ENCODE measurements at regions of chr5 and their contacts with region 1.

Region 1: DNA sequence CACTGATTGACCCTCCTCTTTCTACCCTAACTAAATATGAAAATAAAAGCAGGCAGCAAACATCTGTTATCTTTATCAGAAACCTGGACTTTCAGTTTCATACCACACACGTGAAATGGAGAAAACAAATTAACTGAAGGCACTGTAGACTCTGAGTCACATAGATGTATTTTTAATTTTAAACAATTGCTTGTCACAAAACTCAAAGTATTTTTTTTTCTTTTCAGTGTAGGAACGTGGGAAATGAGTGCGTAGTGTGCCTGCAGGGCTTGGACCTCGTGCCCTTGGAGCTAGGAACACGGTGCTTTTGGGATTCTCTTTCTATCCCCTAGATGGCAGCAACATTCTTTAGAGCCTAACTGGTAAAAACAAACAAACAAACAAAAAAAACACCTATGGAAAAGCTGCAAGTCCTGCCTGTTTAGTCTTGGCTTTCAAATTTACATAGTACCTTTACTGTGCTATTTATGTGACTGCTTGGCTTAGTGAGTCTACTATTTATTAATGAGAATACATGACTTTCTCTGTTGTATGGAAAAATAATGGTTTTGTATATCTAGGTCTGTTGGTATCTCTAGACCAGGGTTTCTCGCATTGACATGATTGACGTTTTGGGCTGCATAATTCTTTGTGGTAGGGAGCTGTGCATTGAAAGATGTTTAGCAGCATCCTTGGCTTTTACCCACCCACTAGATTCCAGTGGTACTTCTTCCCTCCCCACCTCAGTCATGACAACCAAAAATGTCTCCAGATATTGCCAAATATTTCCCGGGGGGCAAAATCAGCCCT is 16.8 kb upstream of the ACTBL2 start:
- DNase-seq: no peak
- H3K4me3 ChIP-seq: no peak overlapping the region
- CTCF ChIP-seq: peak; percentile 61

Region 2: DNA sequence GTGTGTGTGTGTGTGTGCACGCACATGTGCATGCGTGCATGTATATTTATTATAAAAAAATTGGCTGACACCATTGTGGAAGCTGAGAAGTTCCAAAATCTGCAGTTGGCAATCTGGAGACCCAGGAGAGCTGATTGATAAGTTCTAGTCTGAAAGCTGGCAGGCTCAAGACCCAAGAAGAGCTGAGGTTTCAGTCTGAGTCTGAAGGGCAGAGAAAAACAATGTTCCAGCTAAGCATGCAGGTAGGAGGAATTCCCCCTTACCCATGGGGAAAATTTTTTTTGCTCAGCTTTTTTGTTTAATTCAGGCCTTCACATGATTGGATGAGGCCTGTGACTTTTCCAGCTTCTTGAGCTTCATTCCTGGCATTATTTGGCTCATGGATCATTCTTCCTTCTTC is 14.3 kb after region 1 on chr5:
- CTCF ChIA-PET with region 1: interaction called, 42 read pairs
- POLR2A ChIA-PET with region 1: no interaction called
- DNase-seq: no peak
- H3K4me3 ChIP-seq: no peak overlapping the region
- CTCF ChIP-seq: no peak

Region 3: DNA sequence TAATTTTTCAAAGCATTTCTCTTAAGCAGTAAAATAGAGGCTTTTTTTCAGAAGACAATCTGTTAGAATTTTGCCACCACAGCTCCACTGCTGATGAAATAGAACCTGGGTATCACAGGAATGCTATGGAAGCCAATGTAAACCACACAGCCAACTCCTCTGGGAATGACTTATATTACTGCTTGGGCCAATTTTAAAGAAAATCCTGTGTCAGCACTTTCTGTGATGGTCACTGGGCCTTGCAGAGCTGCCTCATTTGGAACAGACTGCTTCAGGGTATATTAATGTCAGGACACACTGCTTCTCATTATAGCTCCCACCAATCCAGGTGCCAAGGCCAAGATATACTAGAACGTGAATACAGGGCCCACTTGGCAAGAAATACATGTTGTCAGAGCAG is 127.2 kb after region 1 on chr5:
- CTCF ChIA-PET with region 1: no interaction called
- POLR2A ChIA-PET with region 1: no interaction called
- DNase-seq: no peak
- H3K4me3 ChIP-seq: no peak overlapping the region
- CTCF ChIP-seq: no peak

Region 4: GRCh38 chr5:57772512-57772911 is 273.1 kb after region 1 on chr5:
- CTCF ChIA-PET with region 1: interaction called, 112 read pairs
- POLR2A ChIA-PET with region 1: no interaction called
- DNase-seq: no peak
- H3K4me3 ChIP-seq: no peak overlapping the region
- CTCF ChIP-seq: no peak